CD14-positive monocyte (primary cell): ENCODE measurements at regions of chr20 and their contacts with region 1.

Region 1: GRCh38 chr20:10673988-10674711 is at the start of gene JAG1:
- DNase-seq: peak; percentile 89 to 95 (median 92)
- H3K4me3 ChIP-seq: peak within 1 kb of the TSS; percentile 77 to 91 (median 80)
- H3K4me3 Mint-ChIP-seq: peak within 1 kb of the TSS; percentile 95 to 97
- H3K27ac ChIP-seq: peak within 1 kb of the TSS; percentile 61 to 86
- H3K27ac Mint-ChIP-seq: peak within 1 kb of the TSS; percentile 85 to 96 (median 92)
- H3K4me1 ChIP-seq: peaks cover 22 to 42% of the 10 kb centered on the region in 2 donors
- H3K4me1 Mint-ChIP-seq: peaks cover 28% of the 10 kb centered on the region
- H3K27me3 ChIP-seq: peaks cover 4 to 24% of the 10 kb centered on the region in 2 donors
- H3K27me3 Mint-ChIP-seq: peaks cover 31 to 33% (median 32%) of the 10 kb centered on the region in 3 donors
- CTCF ChIP-seq: no peak
- polyA plus RNA-seq, gene JAG1: 0.70 to 6.8 (median 0.85) TPM

Region 2: DNA sequence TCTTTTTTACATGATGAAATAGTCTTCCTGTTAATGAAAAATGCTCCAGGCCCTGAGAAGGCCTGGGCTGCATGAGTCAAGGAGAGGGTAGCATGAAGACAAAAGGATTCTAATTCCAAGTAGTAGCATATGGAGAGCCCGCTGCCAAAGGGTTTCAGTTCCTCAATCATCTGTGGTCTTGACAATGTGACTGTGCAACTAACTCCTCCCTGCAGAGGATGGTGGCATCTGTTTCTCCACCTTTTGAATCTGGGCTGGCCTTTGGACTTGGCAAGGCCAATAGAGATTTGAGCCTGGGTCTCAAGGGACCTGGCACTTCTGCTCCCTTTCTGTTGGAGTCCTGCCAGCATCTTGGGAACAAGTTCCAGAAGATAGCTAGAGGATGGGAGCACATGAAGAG is 674.5 kb before region 1 on chr20:
- intact Hi-C with region 1: loop called in 1 of 2 experiments (anchors 10 kb)
- DNase-seq: peak; percentile 67 to 79 (median 76)
- H3K4me3 ChIP-seq: no peak overlapping the region
- H3K4me3 Mint-ChIP-seq: no peak overlapping the region
- H3K27ac ChIP-seq: no peak overlapping the region
- H3K27ac Mint-ChIP-seq: peak overlapping the region in 2 of 7 donors; percentile 57 to 69
- H3K4me1 ChIP-seq: peaks cover 8 to 15% of the 10 kb centered on the region in 2 donors
- H3K4me1 Mint-ChIP-seq: peaks cover 7% of the 10 kb centered on the region
- H3K27me3 ChIP-seq: no peaks in the 10 kb centered on the region
- H3K27me3 Mint-ChIP-seq: peaks cover 0 to 2% (median 1%) of the 10 kb centered on the region in 3 donors
- CTCF ChIP-seq: no peak

Region 3: GRCh38 chr20:10434832-10435812 is 239.0 kb before region 1 on chr20 and contains the start of gene SLX4IP:
- intact Hi-C with region 1: loop called (anchors 5 kb)
- DNase-seq: peak; percentile 91 to 95 (median 94)
- H3K4me3 ChIP-seq: peak within 1 kb of the TSS; percentile 76 to 93 (median 88)
- H3K4me3 Mint-ChIP-seq: peak within 1 kb of the TSS; percentile 92 to 94
- H3K27ac ChIP-seq: peak within 1 kb of the TSS; percentile 84 to 91
- H3K27ac Mint-ChIP-seq: peak within 1 kb of the TSS; percentile 92 to 96 (median 95)
- H3K4me1 ChIP-seq: peaks cover 21 to 33% of the 10 kb centered on the region in 2 donors
- H3K4me1 Mint-ChIP-seq: peaks cover 40% of the 10 kb centered on the region
- H3K27me3 ChIP-seq: no peaks in the 10 kb centered on the region
- H3K27me3 Mint-ChIP-seq: no peaks in the 10 kb centered on the region
- CTCF ChIP-seq: no peak
- polyA plus RNA-seq, gene SLX4IP: 0.76 to 2.5 (median 1.1) TPM

Region 4: GRCh38 chr20:10487142-10488136 is 186.7 kb before region 1 on chr20:
- intact Hi-C with region 1: loop called in 1 of 2 experiments (anchors 10 kb)
- DNase-seq: peak; percentile 70 to 90 (median 82)
- H3K4me3 ChIP-seq: peak overlapping the region in 1 of 3 experiments; percentile 13
- H3K4me3 Mint-ChIP-seq: no peak overlapping the region
- H3K27ac ChIP-seq: peak overlapping the region; percentile 41 to 79
- H3K27ac Mint-ChIP-seq: peak overlapping the region; percentile 81 to 96 (median 92)
- H3K4me1 ChIP-seq: peaks cover 43 to 51% of the 10 kb centered on the region in 2 donors
- H3K4me1 Mint-ChIP-seq: peaks cover 52% of the 10 kb centered on the region
- H3K27me3 ChIP-seq: no peaks in the 10 kb centered on the region
- H3K27me3 Mint-ChIP-seq: no peaks in the 10 kb centered on the region
- CTCF ChIP-seq: no peak

Region 5: DNA sequence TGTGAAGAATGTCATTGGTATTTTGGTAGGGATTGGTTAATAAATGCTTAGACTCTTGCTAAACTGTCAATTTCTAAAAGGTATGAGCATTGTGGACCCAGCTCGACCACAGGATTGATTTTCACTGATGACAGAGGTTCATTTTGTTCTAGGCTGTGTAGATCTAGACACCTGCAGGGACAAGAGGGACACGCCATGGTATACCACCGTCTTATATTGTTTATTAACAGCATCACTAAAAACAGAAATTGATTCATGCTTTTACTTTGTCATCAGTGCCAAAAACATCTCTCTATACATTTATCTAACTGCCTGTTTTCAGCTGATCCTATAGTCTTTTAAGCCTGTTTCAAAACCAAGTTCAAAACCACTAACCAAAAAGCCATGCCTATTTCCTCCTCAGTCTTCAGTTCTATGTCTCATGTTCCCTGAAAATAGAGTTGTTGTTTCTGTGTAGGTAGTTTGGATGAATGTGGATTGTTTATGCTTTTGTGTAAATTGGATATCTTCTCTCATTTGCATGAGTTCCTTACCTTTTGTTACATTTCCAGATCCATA is 110.1 kb before region 1 on chr20:
- intact Hi-C with region 1: loop called in 1 of 2 experiments (anchors 5 kb)
- DNase-seq: no peak
- H3K4me3 ChIP-seq: no peak overlapping the region
- H3K4me3 Mint-ChIP-seq: no peak overlapping the region
- H3K27ac ChIP-seq: no peak overlapping the region
- H3K27ac Mint-ChIP-seq: no peak overlapping the region
- H3K4me1 ChIP-seq: peaks cover 12 to 13% of the 10 kb centered on the region in 2 donors
- H3K4me1 Mint-ChIP-seq: peaks cover 24% of the 10 kb centered on the region
- H3K27me3 ChIP-seq: no peaks in the 10 kb centered on the region
- H3K27me3 Mint-ChIP-seq: peaks cover 0 to 1% (median 0%) of the 10 kb centered on the region in 3 donors
- CTCF ChIP-seq: no peak

Region 6: GRCh38 chr20:11195899-11196558 is 521.9 kb after region 1 on chr20:
- intact Hi-C with region 1: loop called in 1 of 2 experiments (anchors 5 kb)
- DNase-seq: peak in 1 of 3 donors; percentile 21
- H3K4me3 ChIP-seq: no peak overlapping the region
- H3K4me3 Mint-ChIP-seq: no peak overlapping the region
- H3K27ac ChIP-seq: no peak overlapping the region
- H3K27ac Mint-ChIP-seq: peak overlapping the region in 1 of 7 donors; percentile 11
- H3K4me1 ChIP-seq: no peaks in the 10 kb centered on the region
- H3K4me1 Mint-ChIP-seq: no peaks in the 10 kb centered on the region
- H3K27me3 ChIP-seq: no peaks in the 10 kb centered on the region
- H3K27me3 Mint-ChIP-seq: peaks cover 0 to 3% (median 1%) of the 10 kb centered on the region in 3 donors
- CTCF ChIP-seq: no peak